Cardiac septum (tissue), 1 donor: ENCODE measurements at regions of chr5 and their contacts with region 1.

Region 1: GRCh38 chr5:147509710-147510651 is at the start of gene DPYSL3:
- DNase-seq: peak; percentile 83
- total RNA-seq, gene DPYSL3: 51.1 TPM

Region 2: DNA sequence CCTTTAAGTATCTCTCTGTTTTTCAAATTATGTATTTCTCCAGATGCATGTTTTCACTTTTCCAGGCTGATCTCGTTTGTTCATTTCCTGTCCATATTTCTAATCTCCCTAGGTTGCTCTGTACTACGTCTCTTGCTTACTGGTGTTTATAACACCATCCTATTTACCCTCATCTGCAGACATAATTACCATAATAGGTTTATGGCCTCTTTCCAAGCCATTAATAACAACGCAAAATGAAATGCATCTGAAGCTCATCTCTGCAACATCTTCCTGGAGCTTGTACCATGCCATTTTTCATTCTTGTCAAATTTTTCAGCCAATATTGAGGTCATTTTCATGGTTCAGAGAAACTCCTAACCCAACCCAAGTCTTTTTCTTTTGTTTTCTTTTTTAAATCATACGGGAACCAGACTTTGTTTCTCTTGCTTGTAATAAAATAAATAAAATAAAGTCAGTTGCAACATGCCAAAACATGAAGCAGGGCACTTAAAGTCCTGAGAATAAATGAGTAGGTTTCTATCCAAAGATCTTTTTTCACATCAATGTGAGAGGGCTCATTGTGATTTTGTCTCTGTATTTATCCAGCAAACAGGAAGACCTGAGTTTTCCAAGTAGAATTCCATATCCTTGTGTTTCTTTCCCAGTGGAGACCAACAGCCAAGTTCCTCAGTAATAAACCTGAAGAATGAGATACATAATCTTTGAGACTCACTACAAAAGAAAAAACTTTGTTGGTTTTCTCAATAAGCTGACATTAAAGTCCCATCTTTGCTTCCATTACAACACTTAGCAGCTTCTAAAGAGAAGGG is 37.1 kb before region 1 on chr5:
- intact Hi-C with region 1: loop called (anchors 5 kb)
- DNase-seq: no peak

Region 3: GRCh38 chr5:147558826-147559225 is 48.8 kb after region 1 on chr5:
- intact Hi-C with region 1: loop called (anchors 2 kb)
- DNase-seq: no peak